HEK293 (cell line): ENCODE measurements at regions of chr2 and their contacts with region 1.

Region 1: GRCh38 chr2:232126301-232127099 is 165.0 kb downstream of the DIS3L2 start:
- H3K4me3 ChIP-seq: no peak overlapping the region
- H3K27ac ChIP-seq: no peak overlapping the region
- H3K4me1 ChIP-seq: no peaks in the 10 kb centered on the region
- CTCF ChIP-seq: no peak

Region 2: DNA sequence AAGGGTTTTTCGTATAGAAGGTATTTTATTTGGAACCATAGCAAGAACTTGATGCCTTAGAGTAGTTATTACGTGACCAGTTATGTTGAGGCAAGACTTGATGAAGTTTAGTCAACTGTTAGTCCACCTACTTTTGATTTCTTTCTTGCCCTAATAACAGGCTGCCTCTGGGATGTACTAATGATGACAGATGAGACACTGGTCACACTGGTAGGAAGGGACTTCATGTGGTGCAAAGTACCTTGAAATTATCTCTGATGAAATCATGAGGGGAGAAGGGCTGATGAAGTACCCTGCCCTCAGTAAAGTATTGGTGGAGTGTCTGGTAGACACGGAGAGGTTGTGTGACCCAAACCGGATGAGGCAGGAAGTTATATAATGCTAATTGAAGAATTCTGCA is 159.6 kb before region 1 on chr2:
- CTCF ChIA-PET with region 1: interaction called, 10 read pairs
- POLR2A ChIA-PET with region 1: no interaction called
- H3K4me3 ChIP-seq: no peak overlapping the region
- H3K27ac ChIP-seq: no peak overlapping the region
- H3K4me1 ChIP-seq: no peaks in the 10 kb centered on the region
- CTCF ChIP-seq: no peak

Region 3: DNA sequence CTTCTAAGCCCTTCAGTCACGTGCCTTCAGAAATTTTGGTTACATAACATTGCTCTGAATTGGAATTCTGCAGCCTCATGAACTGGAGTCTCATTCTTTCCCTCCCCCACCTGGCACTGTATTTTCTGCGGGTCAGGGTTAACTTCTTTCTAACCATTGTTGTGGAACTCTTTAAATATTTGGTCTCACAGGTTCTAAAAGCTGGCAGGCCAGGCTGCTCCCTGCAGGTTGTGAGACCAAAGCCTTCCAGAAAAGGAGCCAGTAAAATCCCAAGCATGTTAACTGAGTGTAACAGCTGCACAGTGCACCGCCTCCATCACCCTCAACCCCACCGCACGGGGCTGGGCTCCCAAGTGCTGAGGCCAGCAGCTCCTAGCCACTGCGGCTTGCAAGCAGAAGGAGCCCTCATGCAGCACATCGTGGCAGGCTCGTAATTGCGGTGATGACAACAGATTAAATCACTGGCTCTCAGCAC is 78.0 kb after region 1 on chr2:
- CTCF ChIA-PET with region 1: no interaction called
- POLR2A ChIA-PET with region 1: no interaction called
- H3K4me3 ChIP-seq: no peak overlapping the region
- H3K27ac ChIP-seq: no peak overlapping the region
- H3K4me1 ChIP-seq: no peaks in the 10 kb centered on the region
- CTCF ChIP-seq: no peak

Region 4: GRCh38 chr2:232415751-232416527 is 289.4 kb after region 1 on chr2:
- CTCF ChIA-PET with region 1: no interaction called
- POLR2A ChIA-PET with region 1: no interaction called
- H3K4me3 ChIP-seq: no peak overlapping the region
- H3K27ac ChIP-seq: no peak overlapping the region
- H3K4me1 ChIP-seq: no peaks in the 10 kb centered on the region
- CTCF ChIP-seq: no peak